Naive thymus-derived CD4-positive, alpha-beta T cell (primary cell): ENCODE measurements at regions of chr12 and their contacts with region 1.

Region 1: GRCh38 chr12:70277973-70278372 is 34.7 kb downstream of the CNOT2 start:
- DNase-seq: no peak
- ATAC-seq: no peak
- H3K4me3 ChIP-seq: no peak overlapping the region
- H3K4me3 Mint-ChIP-seq: peak overlapping the region in 2 of 10 donors; percentile 19 to 27
- H3K27ac ChIP-seq: no peak overlapping the region
- H3K27ac Mint-ChIP-seq: peak overlapping the region in 5 of 9 donors; percentile 8 to 49 (median 31)
- H3K4me1 ChIP-seq: peaks cover 0 to 3% of the 10 kb centered on the region in 2 donors
- H3K4me1 Mint-ChIP-seq: peaks cover 24 to 85% (median 71%) of the 10 kb centered on the region in 7 donors
- H3K27me3 ChIP-seq: no peaks in the 10 kb centered on the region
- H3K27me3 Mint-ChIP-seq: no peaks in the 10 kb centered on the region

Region 2: GRCh38 chr12:69783356-69783755 is 494.6 kb before region 1 on chr12:
- CTCF ChIA-PET with region 1: no interaction called
- POLR2A ChIA-PET with region 1: no interaction called
- intact Hi-C with region 1: no loop called
- DNase-seq: no peak
- ATAC-seq: no peak
- H3K4me3 ChIP-seq: no peak overlapping the region
- H3K4me3 Mint-ChIP-seq: no peak overlapping the region
- H3K27ac ChIP-seq: no peak overlapping the region
- H3K27ac Mint-ChIP-seq: no peak overlapping the region
- H3K4me1 ChIP-seq: no peaks in the 10 kb centered on the region
- H3K4me1 Mint-ChIP-seq: peaks cover 0 to 21% (median 13%) of the 10 kb centered on the region in 7 donors
- H3K27me3 ChIP-seq: no peaks in the 10 kb centered on the region
- H3K27me3 Mint-ChIP-seq: no peaks in the 10 kb centered on the region

Region 3: DNA sequence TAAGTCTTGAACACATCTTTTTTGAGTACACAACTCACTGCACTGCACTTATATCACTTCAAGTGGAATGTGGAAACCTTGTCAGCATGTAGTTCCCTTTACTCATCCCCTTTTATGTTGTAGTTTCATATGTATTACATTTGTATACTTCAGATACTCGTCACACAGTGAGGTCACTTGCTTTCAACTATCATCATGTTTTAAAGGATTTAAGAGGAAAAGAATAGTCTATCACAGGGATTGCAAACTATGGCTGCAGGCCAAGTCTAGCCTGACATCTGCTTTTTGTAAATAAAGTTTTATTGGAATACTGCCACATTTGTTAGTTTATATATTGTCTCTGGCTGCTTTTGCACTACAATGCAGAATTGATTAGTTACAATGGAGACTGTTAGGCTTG is 10.4 kb before region 1 on chr12:
- CTCF ChIA-PET with region 1: no interaction called
- POLR2A ChIA-PET with region 1: no interaction called
- intact Hi-C with region 1: loop called in 1 of 2 experiments (anchors 2 kb)
- DNase-seq: no peak
- ATAC-seq: no peak
- H3K4me3 ChIP-seq: no peak overlapping the region
- H3K4me3 Mint-ChIP-seq: peak overlapping the region in 6 of 10 donors; percentile 6 to 57 (median 30)
- H3K27ac ChIP-seq: no peak overlapping the region
- H3K27ac Mint-ChIP-seq: peak overlapping the region in 5 of 9 donors; percentile 6 to 39 (median 17)
- H3K4me1 ChIP-seq: peaks cover 23 to 43% of the 10 kb centered on the region in 2 donors
- H3K4me1 Mint-ChIP-seq: peaks cover 31 to 97% (median 89%) of the 10 kb centered on the region in 7 donors
- H3K27me3 ChIP-seq: no peaks in the 10 kb centered on the region
- H3K27me3 Mint-ChIP-seq: no peaks in the 10 kb centered on the region

Region 4: GRCh38 chr12:70292017-70292776 is 14.2 kb after region 1 on chr12:
- CTCF ChIA-PET with region 1: no interaction called
- POLR2A ChIA-PET with region 1: interaction called, 3 read pairs
- intact Hi-C with region 1: loop called in 1 of 2 experiments (anchors 2 kb)
- DNase-seq: no peak
- ATAC-seq: no peak
- H3K4me3 ChIP-seq: no peak overlapping the region
- H3K4me3 Mint-ChIP-seq: peak overlapping the region in 2 of 10 donors; percentile 4 to 27
- H3K27ac ChIP-seq: no peak overlapping the region
- H3K27ac Mint-ChIP-seq: peak overlapping the region in 3 of 9 donors; percentile 12 to 61 (median 14)
- H3K4me1 ChIP-seq: no peaks in the 10 kb centered on the region
- H3K4me1 Mint-ChIP-seq: peaks cover 23 to 70% (median 63%) of the 10 kb centered on the region in 7 donors
- H3K27me3 ChIP-seq: no peaks in the 10 kb centered on the region
- H3K27me3 Mint-ChIP-seq: no peaks in the 10 kb centered on the region

Region 5: DNA sequence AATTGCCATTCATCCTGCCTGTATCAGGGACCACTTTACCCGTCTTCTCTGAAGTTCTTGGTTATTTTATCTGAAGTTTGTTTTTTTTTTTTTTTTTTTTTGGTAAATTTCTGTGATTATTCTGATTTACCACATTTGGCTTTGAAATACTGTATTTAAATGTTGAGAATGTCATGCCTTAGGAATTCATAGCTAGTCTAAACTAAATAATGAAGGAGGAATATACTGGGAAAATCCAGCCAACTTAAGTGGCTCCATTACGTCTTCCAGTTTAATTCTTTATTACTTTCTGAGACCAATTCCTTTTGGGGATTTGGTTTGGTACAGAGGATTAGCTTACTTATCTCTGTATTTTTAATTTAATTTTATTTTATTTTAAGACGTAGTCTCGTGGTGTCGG is 27.8 kb after region 1 on chr12:
- CTCF ChIA-PET with region 1: no interaction called
- POLR2A ChIA-PET with region 1: no interaction called
- intact Hi-C with region 1: no loop called
- DNase-seq: no peak
- ATAC-seq: no peak
- H3K4me3 ChIP-seq: no peak overlapping the region
- H3K4me3 Mint-ChIP-seq: peak overlapping the region in 1 of 10 donors; percentile 75
- H3K27ac ChIP-seq: no peak overlapping the region
- H3K27ac Mint-ChIP-seq: peak overlapping the region in 2 of 9 donors; percentile 22 to 26
- H3K4me1 ChIP-seq: peaks cover 12 to 13% of the 10 kb centered on the region in 2 donors
- H3K4me1 Mint-ChIP-seq: peaks cover 32 to 68% (median 54%) of the 10 kb centered on the region in 7 donors
- H3K27me3 ChIP-seq: no peaks in the 10 kb centered on the region
- H3K27me3 Mint-ChIP-seq: no peaks in the 10 kb centered on the region